GM23248 (cell line): ENCODE measurements at regions of chr12 and their contacts with region 1.

Region 1: GRCh38 chr12:52156736-52157565 is 34.9 kb downstream of the KRT80 start:
- DNase-seq: peak; percentile 65
- H3K4me3 ChIP-seq: no peak overlapping the region
- H3K27ac ChIP-seq: no peak overlapping the region
- H3K4me1 ChIP-seq: peaks cover 9% of the 10 kb centered on the region
- H3K27me3 ChIP-seq: no peaks in the 10 kb centered on the region

Region 2: DNA sequence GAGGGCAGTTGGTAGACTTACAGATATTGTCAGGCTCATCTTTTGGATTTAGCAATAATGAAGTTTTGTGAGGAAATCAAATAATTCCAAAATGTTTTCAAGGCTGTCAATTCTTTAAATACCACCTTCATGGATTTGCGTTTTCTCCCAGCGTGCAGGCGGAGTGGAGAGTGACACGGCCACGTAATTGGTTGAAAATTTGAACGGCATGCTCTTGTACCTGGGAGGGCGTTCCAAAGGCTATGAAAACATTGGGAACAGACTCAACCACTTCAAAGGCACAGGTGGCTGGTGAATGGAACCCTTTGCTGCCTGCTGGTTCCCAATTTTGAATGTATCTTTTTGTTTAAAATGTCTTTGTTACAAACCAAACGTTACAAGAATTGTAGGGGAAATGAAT is 65.1 kb before region 1 on chr12:
- in situ Hi-C with region 1: no loop called
- DNase-seq: no peak
- H3K4me3 ChIP-seq: no peak overlapping the region
- H3K27ac ChIP-seq: no peak overlapping the region
- H3K4me1 ChIP-seq: no peaks in the 10 kb centered on the region
- H3K27me3 ChIP-seq: peaks cover 8% of the 10 kb centered on the region

Region 3: GRCh38 chr12:52879394-52880351 is 722.7 kb after region 1 on chr12:
- in situ Hi-C with region 1: loop called (anchors 10 kb)
- DNase-seq: peak; percentile 92
- H3K4me3 ChIP-seq: peak overlapping the region; percentile 39; the same call in 1 of the 2 replicates
- H3K27ac ChIP-seq: no peak overlapping the region
- H3K4me1 ChIP-seq: peaks cover 4% of the 10 kb centered on the region
- H3K27me3 ChIP-seq: no peaks in the 10 kb centered on the region